ENCODE measurements at regions of chr20 and their contacts with region 1.

Region 1: DNA sequence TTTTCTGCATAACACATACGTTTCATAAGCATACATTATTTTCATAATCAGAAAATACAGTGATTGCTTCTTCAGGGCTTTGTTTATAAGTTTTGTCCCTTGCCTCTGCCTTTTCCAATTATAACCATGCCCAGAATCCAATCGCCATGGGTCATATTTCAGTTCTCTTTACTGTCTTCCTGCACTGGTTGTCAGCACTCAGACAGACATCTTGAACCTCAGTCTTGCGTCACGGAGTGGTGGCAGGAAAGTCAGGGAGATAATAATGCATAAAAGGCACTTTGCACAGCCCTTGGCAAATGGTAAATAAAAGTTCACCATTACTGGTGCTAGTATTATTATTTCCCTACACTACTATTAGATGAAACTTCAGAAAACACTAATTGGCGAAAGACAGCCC is 7.2 kb downstream of the KIF16B start:
- DNase-seq: no peak
- H3K4me3 Mint-ChIP-seq: no peak overlapping the region
- H3K27ac Mint-ChIP-seq: no peak overlapping the region
- H3K4me1 Mint-ChIP-seq: peaks cover 7% of the 10 kb centered on the region
- H3K27me3 Mint-ChIP-seq: no peaks in the 10 kb centered on the region

Region 2: DNA sequence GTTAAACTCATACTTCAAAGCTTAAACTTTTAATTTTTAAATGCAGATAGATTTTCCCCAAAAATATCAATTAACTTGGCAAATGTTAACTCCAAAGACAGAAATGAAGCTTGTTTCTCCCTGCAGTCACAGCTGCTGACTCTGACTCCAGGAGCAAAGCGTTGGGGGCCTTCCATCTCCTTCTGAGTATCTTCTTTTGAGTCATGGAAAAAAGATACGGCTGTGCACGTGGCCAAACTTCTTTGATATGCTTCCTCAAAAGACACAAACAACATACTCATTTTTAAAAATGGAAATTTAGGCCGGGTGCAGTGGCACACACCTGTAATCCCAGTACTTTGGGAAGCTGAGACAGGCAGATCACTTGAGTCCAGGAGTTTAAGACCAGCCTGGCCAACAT is 21.1 kb before region 1 on chr20:
- intact Hi-C with region 1: loop called (anchors 1 kb)
- DNase-seq: no peak
- H3K4me3 Mint-ChIP-seq: no peak overlapping the region
- H3K27ac Mint-ChIP-seq: no peak overlapping the region
- H3K4me1 Mint-ChIP-seq: no peaks in the 10 kb centered on the region
- H3K27me3 Mint-ChIP-seq: no peaks in the 10 kb centered on the region

Region 3: DNA sequence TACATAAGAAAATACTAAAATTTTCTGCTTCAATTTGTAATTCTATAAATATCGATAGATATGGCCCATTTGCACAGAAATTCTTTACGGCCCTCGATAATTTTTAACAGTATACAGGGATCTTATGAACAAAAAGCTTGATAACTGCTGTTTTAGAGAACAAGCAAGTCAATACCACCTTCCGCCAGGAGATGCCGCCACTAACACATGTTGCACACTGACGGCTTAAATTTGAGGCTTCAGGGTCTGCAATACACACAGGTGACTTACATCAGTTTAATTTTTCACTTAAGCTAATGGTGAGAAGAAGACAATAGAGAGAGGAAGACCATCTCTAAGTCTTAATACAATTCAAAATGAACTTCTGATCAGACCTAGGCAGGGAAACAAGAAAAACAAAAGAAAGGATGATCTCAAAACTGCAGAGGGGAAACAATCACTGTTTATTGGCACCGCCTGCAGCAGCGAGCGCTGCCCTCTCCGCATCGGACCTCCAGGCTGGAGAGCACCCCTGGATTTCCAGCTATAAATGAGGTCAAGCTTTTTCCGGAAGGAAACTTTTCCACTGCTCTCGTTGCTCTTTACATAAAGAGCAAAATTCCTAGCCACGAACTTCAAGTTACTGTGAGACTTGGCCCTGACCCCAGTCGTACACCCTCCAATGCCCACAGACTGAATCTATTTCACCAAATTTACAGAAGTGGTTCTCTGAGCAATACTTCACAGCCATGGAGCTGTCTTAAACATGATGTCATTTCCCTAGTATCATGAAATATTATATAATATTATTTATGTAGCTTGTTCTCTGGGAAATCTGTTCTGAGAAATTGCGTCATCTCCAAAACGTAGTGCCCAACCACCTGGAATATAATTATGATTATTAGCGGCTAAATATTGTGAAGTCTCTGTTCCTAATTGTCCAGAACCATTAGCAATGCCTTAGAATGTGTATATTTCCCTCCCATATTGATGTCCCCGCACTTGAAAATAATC is 236.1 kb after region 1 on chr20:
- intact Hi-C with region 1: no loop called
- DNase-seq: peak; percentile 13
- H3K4me3 Mint-ChIP-seq: no peak overlapping the region
- H3K27ac Mint-ChIP-seq: no peak overlapping the region
- H3K4me1 Mint-ChIP-seq: no peaks in the 10 kb centered on the region
- H3K27me3 Mint-ChIP-seq: peaks cover 18% of the 10 kb centered on the region

Measured in activated T-helper 2 cell treated with anti-CD3 and anti-CD28 coated beads, Interferon-gamma antibody, Interleukin-2, Interleukin-4, amounts not matched to agents 10 μg/mL and 5 μg/mL and 100 μg/mL, durations not matched to agents 14 hours and 24 hours and 36 hours (primary cell).